GM13977 (cell line): ENCODE measurements at regions of chr19 and their contacts with region 1.

Region 1: GRCh38 chr19:3125900-3126524 is 9.8 kb upstream of the GNA15 start:
- DNase-seq: peak; percentile 86
- CTCF ChIP-seq: peak; percentile 77

Region 2: GRCh38 chr19:3163230-3163886 is 37.3 kb after region 1 on chr19:
- in situ Hi-C with region 1: loop called (anchors 5 kb)
- DNase-seq: peak; percentile 92
- CTCF ChIP-seq: peak; percentile 96

Region 3: GRCh38 chr19:3266792-3267514 is 140.9 kb after region 1 on chr19:
- in situ Hi-C with region 1: no loop called
- DNase-seq: no peak
- CTCF ChIP-seq: no peak